HepG2 (cell line): ENCODE measurements at regions of chr6 and their contacts with region 1.

Region 1: GRCh38 chr6:84263557-84263956 is 36.1 kb upstream of the CEP162 start:
- DNase-seq: peak; percentile 63
- ATAC-seq: peak; percentile 100
- H3K4me3 ChIP-seq: no peak overlapping the region
- H3K27ac ChIP-seq: no peak overlapping the region
- H3K4me1 ChIP-seq: peaks cover 16% of the 10 kb centered on the region
- H3K27me3 ChIP-seq: no peaks in the 10 kb centered on the region
- CTCF ChIP-seq: no peak
- EP300 ChIP-seq: no peak
- POLR2A ChIP-seq: no peak
- RAD21 ChIP-seq: no peak

Region 2: GRCh38 chr6:84227434-84228197 is 35.9 kb before region 1 on chr6 and contains the start of gene CEP162:
- CTCF ChIA-PET with region 1: no interaction called
- POLR2A ChIA-PET with region 1: no interaction called
- in situ Hi-C with region 1: no loop called
- intact Hi-C with region 1: loop called (anchors 1 kb)
- DNase-seq: peak; percentile 85
- ATAC-seq: peak; percentile 98
- H3K4me3 ChIP-seq: peak within 1 kb of the TSS; percentile 86 to 95 (median 88)
- H3K27ac ChIP-seq: peak within 1 kb of the TSS; percentile 79
- H3K4me1 ChIP-seq: peaks cover 17% of the 10 kb centered on the region
- H3K27me3 ChIP-seq: no peaks in the 10 kb centered on the region; a peak in 1 of 5 replicates
- CTCF ChIP-seq: peak; percentile 62
- EP300 ChIP-seq: no peak
- POLR2A ChIP-seq: no peak
- RAD21 ChIP-seq: 0 out of 2 replicates have a peak, but pooled peaks have one; percentile 9
- total RNA-seq, gene CEP162: 7.9 and 10.0 TPM in 2 replicates